ENCODE measurements at regions of chr12 and their contacts with region 1.

Region 1: DNA sequence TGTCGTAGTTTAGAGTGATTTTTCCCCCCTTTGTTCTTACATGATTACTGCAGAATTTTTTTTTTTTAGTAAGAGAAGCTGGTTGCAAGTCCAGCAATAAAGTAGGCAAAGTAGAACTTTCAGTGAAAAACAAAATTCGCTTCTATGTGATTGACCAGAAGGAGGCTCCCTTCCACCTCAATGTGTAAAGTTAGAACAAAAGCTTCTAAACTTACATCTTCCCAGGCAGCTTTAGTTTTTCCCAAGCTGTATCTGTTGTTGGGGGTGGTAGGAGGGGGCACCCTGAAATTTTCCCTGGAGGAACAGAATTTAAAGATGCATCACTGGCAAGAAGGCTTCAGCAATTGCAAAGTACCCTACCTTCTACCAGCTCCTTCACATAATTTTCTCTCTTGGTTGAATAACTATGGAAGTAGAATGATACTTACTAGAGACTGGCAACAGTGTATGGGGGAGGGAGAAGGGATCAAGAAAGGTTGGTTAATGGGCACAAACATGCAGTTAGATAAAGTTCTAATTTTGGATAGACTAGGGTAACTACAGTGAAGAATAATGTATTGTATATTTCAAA is 87.3 kb upstream of the E2F7 start:
- DNase-seq: peak; percentile 68
- H3K4me3 ChIP-seq: no peak overlapping the region
- H3K27ac ChIP-seq: no peak overlapping the region
- H3K4me1 ChIP-seq: no peaks in the 10 kb centered on the region
- H3K27me3 ChIP-seq: no peaks in the 10 kb centered on the region
- CTCF ChIP-seq: peak; percentile 32 to 48
- POLR2A ChIP-seq: no peak

Region 2: DNA sequence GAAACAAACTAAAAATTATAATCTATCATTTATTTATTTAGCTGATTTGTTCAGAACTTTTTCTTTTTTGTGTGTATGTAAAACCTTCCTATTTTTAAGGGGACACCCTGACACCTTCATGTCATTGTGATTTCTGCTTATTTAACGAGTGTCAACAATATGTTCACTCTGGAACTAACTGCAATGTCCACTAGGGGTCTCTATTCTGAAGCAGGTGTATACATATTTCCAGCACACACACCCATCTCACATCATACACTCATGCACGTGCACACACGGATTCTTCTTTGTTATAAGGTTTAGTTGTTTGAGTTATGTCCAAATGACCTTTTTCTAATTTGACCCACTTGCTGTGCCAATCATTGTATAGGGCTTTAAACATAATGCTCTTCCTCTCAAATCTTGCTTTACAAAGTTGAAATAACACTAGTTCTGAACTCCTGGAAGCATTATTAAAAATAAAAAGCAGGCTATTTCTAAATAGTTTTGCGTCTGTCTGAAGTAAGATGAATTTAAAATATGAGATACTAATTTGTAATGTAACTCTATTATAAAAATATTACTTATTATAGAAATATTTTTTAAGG is 102.8 kb before region 1 on chr12:
- CTCF ChIA-PET with region 1: interaction called, 15 read pairs
- POLR2A ChIA-PET with region 1: no interaction called
- dilution Hi-C with region 1: no loop called
- intact Hi-C with region 1: loop called (anchors 5 kb)
- DNase-seq: peak; percentile 78
- H3K4me3 ChIP-seq: no peak overlapping the region
- H3K27ac ChIP-seq: no peak overlapping the region
- H3K4me1 ChIP-seq: no peaks in the 10 kb centered on the region
- H3K27me3 ChIP-seq: no peaks in the 10 kb centered on the region
- CTCF ChIP-seq: peak; percentile 60 to 64
- POLR2A ChIP-seq: no peak

Region 3: DNA sequence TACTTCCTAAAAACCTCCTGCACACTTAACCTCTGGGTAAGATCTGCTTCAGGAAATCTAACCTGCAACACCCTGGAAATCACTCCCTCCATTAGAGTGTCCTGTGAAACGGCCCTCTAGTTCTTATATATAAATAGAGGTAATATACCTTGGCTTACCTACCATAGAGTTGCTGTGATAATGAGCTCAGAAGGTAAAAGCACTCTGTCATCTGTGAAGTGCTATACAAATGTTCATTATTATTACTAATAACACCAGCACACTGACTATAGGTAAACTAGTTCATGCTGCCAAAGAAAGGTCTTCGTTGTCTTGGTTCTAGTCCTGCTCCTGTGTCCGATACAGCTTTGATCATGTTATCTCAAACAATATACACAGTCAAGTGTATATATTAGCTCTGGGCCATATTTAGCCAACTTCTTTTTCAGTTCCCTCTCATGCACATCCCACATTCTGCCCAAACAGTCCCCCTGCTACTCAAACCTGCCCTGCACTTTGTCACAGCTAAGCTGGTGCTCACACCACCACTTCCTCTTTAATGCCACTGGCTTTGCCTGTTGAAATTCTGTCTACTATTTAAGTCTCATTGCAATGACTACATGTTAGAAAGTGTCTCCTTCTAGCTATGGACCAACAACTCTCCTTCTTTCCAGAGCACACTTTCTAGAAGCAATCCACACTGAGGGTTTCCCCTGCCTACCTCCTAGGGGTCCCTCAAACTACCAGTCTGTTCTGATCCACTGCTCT is 92.4 kb before region 1 on chr12:
- CTCF ChIA-PET with region 1: interaction called, 14 read pairs
- POLR2A ChIA-PET with region 1: no interaction called
- dilution Hi-C with region 1: no loop called
- intact Hi-C with region 1: no loop called
- DNase-seq: no peak
- H3K4me3 ChIP-seq: no peak overlapping the region
- H3K27ac ChIP-seq: no peak overlapping the region
- H3K4me1 ChIP-seq: peaks cover 24% of the 10 kb centered on the region
- H3K27me3 ChIP-seq: no peaks in the 10 kb centered on the region
- CTCF ChIP-seq: no peak
- POLR2A ChIP-seq: no peak

Region 4: DNA sequence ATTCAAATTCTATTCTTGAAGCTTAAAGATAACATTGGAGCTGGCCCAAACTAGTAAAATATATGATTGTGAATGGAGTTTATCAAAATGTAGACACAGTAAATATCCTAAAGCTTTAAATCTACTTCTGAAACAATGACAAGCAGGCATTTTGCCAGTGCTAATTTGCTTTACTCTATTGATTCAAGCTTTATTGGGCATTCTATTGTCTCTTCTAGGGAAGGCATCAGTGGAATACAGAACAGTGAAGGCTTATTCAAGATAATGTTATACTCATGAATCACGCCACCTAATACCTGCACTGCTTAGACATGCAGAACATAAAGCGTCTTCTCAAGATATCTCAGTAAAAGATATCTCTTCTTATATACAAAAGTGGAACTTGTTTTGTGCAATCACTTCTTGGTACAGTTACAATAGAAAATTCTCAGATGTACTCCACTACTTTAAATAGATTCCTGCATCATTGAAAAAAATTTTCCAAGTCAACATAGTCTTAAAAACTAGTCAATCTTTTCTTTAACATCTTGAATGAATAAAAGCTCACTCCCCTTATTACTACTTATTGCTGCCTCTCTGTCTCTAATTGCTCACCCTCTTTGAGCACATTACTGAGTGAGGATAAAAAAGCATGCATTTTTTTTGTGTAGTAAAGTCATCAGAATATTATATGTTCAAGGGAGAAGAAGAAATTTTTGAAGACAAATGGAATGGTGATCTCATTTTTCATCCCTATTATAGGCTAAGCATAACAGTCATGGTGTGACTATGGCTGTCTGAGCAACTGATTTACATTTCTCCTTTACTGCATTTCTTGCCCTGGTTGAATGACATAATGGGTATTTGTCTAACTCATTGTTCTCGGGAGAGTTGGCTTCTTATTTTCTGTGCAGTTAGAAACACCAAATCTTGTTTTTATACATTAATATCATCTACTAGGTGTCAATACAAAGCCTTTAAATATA is 10.6 kb after region 1 on chr12:
- CTCF ChIA-PET with region 1: interaction called, 12 read pairs
- POLR2A ChIA-PET with region 1: no interaction called
- dilution Hi-C with region 1: no loop called
- intact Hi-C with region 1: no loop called
- DNase-seq: no peak
- H3K4me3 ChIP-seq: no peak overlapping the region
- H3K27ac ChIP-seq: no peak overlapping the region
- H3K4me1 ChIP-seq: no peaks in the 10 kb centered on the region
- H3K27me3 ChIP-seq: no peaks in the 10 kb centered on the region
- CTCF ChIP-seq: no peak
- POLR2A ChIP-seq: no peak

Region 5: GRCh38 chr12:77685112-77685511 is 532.4 kb after region 1 on chr12:
- CTCF ChIA-PET with region 1: interaction called, 132 read pairs
- POLR2A ChIA-PET with region 1: no interaction called
- dilution Hi-C with region 1: no loop called
- intact Hi-C with region 1: loop called (anchors 1 kb)
- DNase-seq: peak; percentile 80
- H3K4me3 ChIP-seq: no peak overlapping the region
- H3K27ac ChIP-seq: no peak overlapping the region
- H3K4me1 ChIP-seq: peaks cover 2% of the 10 kb centered on the region
- H3K27me3 ChIP-seq: peaks cover 0 to under 1% of the 10 kb centered on the region in 2 experiments
- CTCF ChIP-seq: peak; percentile 54 to 57
- POLR2A ChIP-seq: no peak